Activated CD4-positive, alpha-beta memory T cell treated with anti-CD3 and anti-CD28 coated beads for 36 hours (primary cell): ENCODE measurements at regions of chr1 and their contacts with region 1.

Region 1: DNA sequence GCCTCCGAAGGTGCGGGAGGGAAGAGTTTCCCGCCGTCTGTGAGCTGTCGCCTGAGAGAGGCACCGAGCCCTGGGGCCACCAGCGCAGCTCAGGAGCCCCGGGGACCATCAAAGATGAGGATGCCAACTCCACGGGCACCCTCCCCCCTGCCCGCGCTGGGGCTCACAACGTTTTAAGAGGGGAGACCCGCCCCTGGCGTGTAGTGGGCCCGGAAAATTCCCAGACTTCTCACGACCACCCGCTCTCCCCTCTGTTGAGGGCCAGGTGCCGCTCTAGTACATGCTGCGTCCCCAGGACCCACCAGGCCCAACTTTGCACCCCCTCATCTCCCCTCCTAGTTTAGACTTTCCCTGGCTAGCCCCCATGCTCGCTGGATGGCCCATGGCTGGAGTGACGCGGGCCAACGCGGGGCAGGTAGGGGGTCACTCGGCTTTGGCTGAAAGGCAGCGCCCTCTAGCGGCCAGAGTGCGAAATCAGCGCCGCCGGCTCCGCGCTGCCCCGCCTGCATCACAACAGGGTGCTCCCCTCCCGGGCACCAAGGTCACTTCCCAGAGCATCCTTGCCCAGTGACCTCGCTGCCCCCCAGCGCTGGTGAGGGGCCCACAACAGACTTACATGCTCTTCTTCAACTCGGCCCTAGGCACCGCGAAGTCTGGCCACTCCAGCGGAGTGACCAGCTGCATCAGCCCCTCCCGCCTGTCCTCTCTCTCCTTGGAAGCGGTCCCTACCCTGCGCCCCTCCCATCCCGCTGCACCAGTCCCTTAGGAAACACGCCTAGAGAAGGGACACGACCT is 1.8 kb downstream of the CD160 start:
- DNase-seq: peak; percentile 76
- H3K4me3 Mint-ChIP-seq: no peak overlapping the region
- H3K27ac Mint-ChIP-seq: no peak overlapping the region
- H3K4me1 Mint-ChIP-seq: peaks cover 19% of the 10 kb centered on the region
- H3K27me3 Mint-ChIP-seq: peaks cover 21% of the 10 kb centered on the region

Region 2: DNA sequence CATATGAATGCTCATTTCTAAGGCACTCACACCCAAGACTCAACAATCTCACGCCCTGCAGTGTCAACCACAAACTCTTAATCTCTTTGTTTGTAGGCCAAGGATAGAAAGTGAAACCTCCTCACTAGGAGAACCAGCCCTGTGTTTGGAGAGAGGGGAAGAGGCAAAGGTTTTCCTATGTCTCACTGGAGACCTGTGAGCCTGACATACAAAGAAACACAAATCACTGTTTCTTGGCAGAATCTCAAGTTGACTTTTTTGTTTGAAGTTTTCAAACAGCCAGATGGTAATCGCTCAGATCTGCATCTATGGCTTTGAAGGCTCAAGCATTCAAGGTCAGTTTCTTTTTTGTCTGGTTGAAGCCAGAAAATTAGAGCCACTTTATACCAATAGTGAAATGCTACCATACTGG is 30.4 kb before region 1 on chr1:
- CTCF ChIA-PET with region 1: interaction called, 26 read pairs
- POLR2A ChIA-PET with region 1: no interaction called
- intact Hi-C with region 1: no loop called
- DNase-seq: peak; percentile 54
- H3K4me3 Mint-ChIP-seq: no peak overlapping the region
- H3K27ac Mint-ChIP-seq: no peak overlapping the region
- H3K4me1 Mint-ChIP-seq: peaks cover 23% of the 10 kb centered on the region
- H3K27me3 Mint-ChIP-seq: no peaks in the 10 kb centered on the region

Region 3: GRCh38 chr1:145708063-145708699 is 12.9 kb before region 1 on chr1:
- CTCF ChIA-PET with region 1: interaction called, 14 read pairs
- POLR2A ChIA-PET with region 1: interaction called, 3 read pairs
- intact Hi-C with region 1: no loop called
- DNase-seq: no peak
- H3K4me3 Mint-ChIP-seq: no peak overlapping the region
- H3K27ac Mint-ChIP-seq: no peak overlapping the region
- H3K4me1 Mint-ChIP-seq: no peaks in the 10 kb centered on the region
- H3K27me3 Mint-ChIP-seq: no peaks in the 10 kb centered on the region

Region 4: DNA sequence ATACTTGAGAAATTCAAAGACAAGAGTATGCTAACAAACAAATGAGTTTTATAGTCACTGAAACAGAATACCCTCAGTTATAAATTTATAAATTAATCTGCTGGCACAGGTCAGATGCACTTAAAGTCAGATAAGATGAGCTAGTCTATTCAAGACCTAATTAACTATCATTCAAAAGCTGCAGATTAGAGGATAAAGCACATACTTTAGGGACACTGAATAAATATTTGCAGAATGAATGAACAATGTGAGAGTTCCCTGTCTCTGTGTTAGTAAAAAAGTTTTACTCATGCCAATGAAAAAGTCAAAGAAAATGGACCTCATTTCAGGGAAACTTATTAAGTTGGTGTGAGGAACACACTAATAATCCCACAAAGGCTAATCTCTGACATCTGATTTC is 44.5 kb after region 1 on chr1:
- CTCF ChIA-PET with region 1: no interaction called
- POLR2A ChIA-PET with region 1: no interaction called
- intact Hi-C with region 1: no loop called
- DNase-seq: no peak
- H3K4me3 Mint-ChIP-seq: no peak overlapping the region
- H3K27ac Mint-ChIP-seq: no peak overlapping the region
- H3K4me1 Mint-ChIP-seq: no peaks in the 10 kb centered on the region
- H3K27me3 Mint-ChIP-seq: no peaks in the 10 kb centered on the region